ENCODE measurements at regions of chr1 and their contacts with region 1.

Region 1: DNA sequence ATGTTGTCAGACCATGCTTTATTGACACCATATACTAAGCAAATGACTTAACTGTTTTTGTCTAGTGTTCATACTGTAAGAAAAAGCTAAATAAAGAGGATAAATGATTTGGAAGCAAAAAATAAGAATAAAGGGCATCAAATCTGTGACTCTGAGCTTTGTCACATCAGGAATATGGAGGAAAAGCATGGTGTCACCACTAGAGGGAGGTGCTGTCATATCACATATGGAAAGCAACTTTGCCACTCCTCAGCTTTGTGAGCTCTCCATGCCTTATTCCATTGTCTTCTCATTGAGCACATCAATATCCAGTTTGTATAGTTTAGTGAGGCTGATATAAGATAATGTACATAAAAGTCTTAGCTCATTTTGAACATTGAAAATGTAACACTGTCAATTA is 20.8 kb upstream of the GBP1 start:
- DNase-seq: peak; percentile 40
- ATAC-seq: peak; percentile 78
- H3K4me3 ChIP-seq: no peak overlapping the region
- H3K27ac ChIP-seq: no peak overlapping the region
- H3K4me1 ChIP-seq: no peaks in the 10 kb centered on the region
- H3K27me3 ChIP-seq: no peaks in the 10 kb centered on the region
- CTCF ChIP-seq: peak; percentile 74 to 84 (median 82)
- POLR2A ChIP-seq: no peak
- RAD21 ChIP-seq: peak; percentile 88

Region 2: GRCh38 chr1:88451856-88452255 is 633.9 kb before region 1 on chr1:
- CTCF ChIA-PET with region 1: no interaction called
- POLR2A ChIA-PET with region 1: no interaction called
- RAD21 ChIA-PET with region 1: no interaction called
- intact Hi-C with region 1: no loop called
- DNase-seq: no peak
- ATAC-seq: no peak
- H3K4me3 ChIP-seq: no peak overlapping the region
- H3K27ac ChIP-seq: no peak overlapping the region
- H3K4me1 ChIP-seq: no peaks in the 10 kb centered on the region
- H3K27me3 ChIP-seq: no peaks in the 10 kb centered on the region
- CTCF ChIP-seq: no peak
- POLR2A ChIP-seq: no peak
- RAD21 ChIP-seq: no peak

Region 3: GRCh38 chr1:89358287-89358893 is 272.6 kb after region 1 on chr1:
- CTCF ChIA-PET with region 1: interaction called, 46 read pairs
- POLR2A ChIA-PET with region 1: interaction called, 6 read pairs
- RAD21 ChIA-PET with region 1: interaction called, 3 read pairs
- intact Hi-C with region 1: loop called (anchors 1 kb)
- DNase-seq: peak; percentile 63
- ATAC-seq: peak; percentile 96
- H3K4me3 ChIP-seq: no peak overlapping the region
- H3K27ac ChIP-seq: no peak overlapping the region
- H3K4me1 ChIP-seq: no peaks in the 10 kb centered on the region
- H3K27me3 ChIP-seq: no peaks in the 10 kb centered on the region
- CTCF ChIP-seq: peak; percentile 65 to 90 (median 81)
- POLR2A ChIP-seq: no peak
- RAD21 ChIP-seq: peak; percentile 88

Region 4: GRCh38 chr1:89472952-89473351 is 387.2 kb after region 1 on chr1:
- CTCF ChIA-PET with region 1: no interaction called
- POLR2A ChIA-PET with region 1: no interaction called
- RAD21 ChIA-PET with region 1: no interaction called
- intact Hi-C with region 1: no loop called
- DNase-seq: no peak
- ATAC-seq: no peak
- H3K4me3 ChIP-seq: no peak overlapping the region
- H3K27ac ChIP-seq: no peak overlapping the region
- H3K4me1 ChIP-seq: no peaks in the 10 kb centered on the region
- H3K27me3 ChIP-seq: no peaks in the 10 kb centered on the region
- CTCF ChIP-seq: no peak
- POLR2A ChIP-seq: no peak
- RAD21 ChIP-seq: no peak